Breast epithelium (tissue), 4 donors: ENCODE measurements at regions of chr21 and their contacts with region 1.

Region 1: DNA sequence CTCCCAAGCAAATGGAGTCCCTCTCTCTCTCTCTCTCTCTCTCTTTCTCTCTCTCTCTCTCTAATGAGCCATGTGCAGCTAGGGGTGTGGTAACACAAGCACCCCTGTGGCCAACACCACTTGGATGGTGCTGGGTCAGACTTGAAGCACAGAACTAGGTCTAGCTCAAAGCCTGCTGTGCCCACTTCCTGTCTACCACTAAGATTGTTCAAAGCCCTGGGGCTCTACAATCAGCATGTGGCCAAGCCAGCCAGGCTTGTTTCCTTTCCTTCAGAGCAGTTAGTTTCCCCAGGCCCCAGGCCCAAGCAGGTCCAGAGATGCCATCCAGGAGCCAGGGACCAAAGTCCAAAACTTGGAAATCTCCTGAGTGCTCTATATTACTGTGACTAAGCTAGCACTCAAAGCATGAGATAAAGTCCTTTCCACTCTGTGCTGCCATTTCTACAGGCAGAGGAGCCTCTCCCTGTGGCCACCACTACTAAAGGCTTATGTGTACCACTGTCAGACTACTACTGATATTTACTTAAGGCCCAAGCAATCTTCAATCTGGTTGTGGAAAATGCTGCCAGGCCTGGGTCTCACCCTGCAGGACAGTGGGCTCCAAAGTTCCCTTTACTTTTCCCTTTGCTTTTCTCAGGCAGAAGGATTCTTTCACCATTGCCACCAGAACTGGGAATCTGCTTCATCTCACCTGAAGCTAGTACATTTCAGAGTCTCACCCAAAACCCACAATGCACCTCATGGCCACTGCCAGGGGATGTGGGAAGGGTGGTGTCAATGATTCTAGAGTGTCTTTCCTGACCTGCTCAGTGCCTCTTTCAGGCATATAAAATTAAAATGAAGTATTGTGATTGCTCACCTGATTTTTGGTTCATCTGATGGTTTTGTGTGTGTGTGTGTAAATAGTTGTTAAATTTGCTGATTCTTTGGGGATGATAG is 999.5 kb downstream of the NCAM2 start:
- DNase-seq: no peak
- H3K4me3 ChIP-seq: no peak overlapping the region
- H3K27ac ChIP-seq: no peak overlapping the region
- H3K4me1 ChIP-seq: no peaks in the 10 kb centered on the region
- H3K27me3 ChIP-seq: no peaks in the 10 kb centered on the region
- CTCF ChIP-seq: no peak
- POLR2A ChIP-seq: no peak

Region 2: GRCh38 chr21:22056904-22057303 is 59.2 kb after region 1 on chr21:
- intact Hi-C with region 1: no loop called
- DNase-seq: no peak
- H3K4me3 ChIP-seq: no peak overlapping the region
- H3K27ac ChIP-seq: no peak overlapping the region
- H3K4me1 ChIP-seq: no peaks in the 10 kb centered on the region
- H3K27me3 ChIP-seq: no peaks in the 10 kb centered on the region
- CTCF ChIP-seq: no peak
- POLR2A ChIP-seq: no peak

Region 3: DNA sequence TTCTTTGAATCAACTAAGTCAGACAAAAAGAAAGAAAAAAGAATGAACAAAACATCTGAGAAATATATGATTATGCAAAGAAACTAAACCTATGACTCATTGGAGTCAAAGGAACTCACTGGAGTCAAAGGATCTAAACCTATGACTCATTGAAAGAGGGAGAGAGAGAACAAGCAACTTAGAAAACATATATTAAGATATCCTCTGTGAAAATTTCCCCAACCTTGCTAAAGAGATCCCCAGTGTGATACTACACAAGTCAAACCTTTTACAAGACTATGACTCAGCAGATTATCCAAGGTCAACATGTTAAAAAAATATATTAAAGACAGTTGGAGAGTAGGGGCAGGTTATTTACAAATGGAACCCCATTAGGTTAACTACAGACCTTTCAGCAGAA is 538.8 kb after region 1 on chr21:
- intact Hi-C with region 1: loop called (anchors 5 kb)
- DNase-seq: no peak
- H3K4me3 ChIP-seq: no peak overlapping the region
- H3K27ac ChIP-seq: no peak overlapping the region
- H3K4me1 ChIP-seq: no peaks in the 10 kb centered on the region
- H3K27me3 ChIP-seq: no peaks in the 10 kb centered on the region
- CTCF ChIP-seq: no peak
- POLR2A ChIP-seq: no peak

Region 4: DNA sequence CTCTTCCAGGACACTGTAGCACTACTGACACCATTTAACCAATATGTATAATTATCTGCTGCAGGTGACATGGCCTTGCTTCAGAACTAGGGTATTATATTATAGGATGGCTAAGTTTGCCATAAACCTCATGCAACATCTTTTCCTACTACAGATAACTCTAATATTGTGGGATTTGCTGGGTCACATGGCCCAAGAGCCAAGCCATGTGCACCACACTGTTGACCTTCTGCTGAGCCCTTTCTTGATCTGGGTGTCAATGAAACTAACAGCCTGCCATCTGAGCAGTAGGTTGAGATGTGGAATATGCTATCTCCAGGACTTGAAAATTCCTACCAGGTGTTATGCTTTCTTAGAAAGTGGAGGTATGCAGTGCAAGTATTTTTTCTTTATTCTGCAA is 1318.5 kb after region 1 on chr21:
- intact Hi-C with region 1: no loop called
- DNase-seq: no peak
- H3K4me3 ChIP-seq: no peak overlapping the region
- H3K27ac ChIP-seq: no peak overlapping the region
- H3K4me1 ChIP-seq: no peaks in the 10 kb centered on the region
- H3K27me3 ChIP-seq: no peaks in the 10 kb centered on the region
- CTCF ChIP-seq: no peak
- POLR2A ChIP-seq: no peak